ENCODE measurements at regions of chr1 and their contacts with region 1.

Region 1: GRCh38 chr1:167270349-167271092 is 49.8 kb downstream of the POU2F1 start:
- DNase-seq: no peak
- H3K4me3 Mint-ChIP-seq: no peak overlapping the region
- H3K27ac Mint-ChIP-seq: no peak overlapping the region
- H3K4me1 Mint-ChIP-seq: peaks cover 37% of the 10 kb centered on the region
- H3K27me3 Mint-ChIP-seq: no peaks in the 10 kb centered on the region

Region 2: GRCh38 chr1:167121375-167122120 is 149.0 kb before region 1 on chr1:
- CTCF ChIA-PET with region 1: no interaction called
- intact Hi-C with region 1: loop called (anchors 5 kb)
- DNase-seq: peak; percentile 58
- H3K4me3 Mint-ChIP-seq: peak overlapping the region; percentile 81
- H3K27ac Mint-ChIP-seq: no peak overlapping the region
- H3K4me1 Mint-ChIP-seq: peaks cover 3% of the 10 kb centered on the region
- H3K27me3 Mint-ChIP-seq: peaks cover 2% of the 10 kb centered on the region

Region 3: DNA sequence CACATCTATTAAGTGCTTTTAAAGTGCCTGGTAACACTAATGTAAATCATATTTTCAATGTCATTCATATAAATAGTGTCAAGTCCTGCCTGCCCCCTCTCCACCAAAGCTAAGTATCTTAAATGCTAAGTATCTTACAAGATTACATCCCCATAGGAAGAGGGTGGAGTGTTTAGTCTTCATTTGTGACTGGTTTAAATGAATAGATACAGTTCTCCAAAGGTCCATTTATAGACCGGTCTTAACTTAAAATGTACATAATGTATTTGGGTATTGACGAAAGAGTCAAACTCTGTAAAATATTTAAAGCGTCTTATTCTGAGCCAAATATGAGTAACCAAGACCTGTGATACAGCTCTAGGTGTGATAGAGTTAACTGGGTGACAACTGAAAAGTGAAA is 10.4 kb after region 1 on chr1:
- CTCF ChIA-PET with region 1: interaction called, 10 read pairs
- intact Hi-C with region 1: no loop called
- DNase-seq: no peak
- H3K4me3 Mint-ChIP-seq: no peak overlapping the region
- H3K27ac Mint-ChIP-seq: no peak overlapping the region
- H3K4me1 Mint-ChIP-seq: peaks cover 39% of the 10 kb centered on the region
- H3K27me3 Mint-ChIP-seq: no peaks in the 10 kb centered on the region

Region 4: GRCh38 chr1:167373398-167373797 is 102.9 kb after region 1 on chr1:
- CTCF ChIA-PET with region 1: no interaction called
- intact Hi-C with region 1: no loop called
- DNase-seq: no peak
- H3K4me3 Mint-ChIP-seq: no peak overlapping the region
- H3K27ac Mint-ChIP-seq: no peak overlapping the region
- H3K4me1 Mint-ChIP-seq: no peaks in the 10 kb centered on the region
- H3K27me3 Mint-ChIP-seq: no peaks in the 10 kb centered on the region

Region 5: GRCh38 chr1:167401260-167401873 is 130.8 kb after region 1 on chr1:
- CTCF ChIA-PET with region 1: interaction called, 11 read pairs
- intact Hi-C with region 1: loop called (anchors 2 kb)
- DNase-seq: peak; percentile 70
- H3K4me3 Mint-ChIP-seq: no peak overlapping the region
- H3K27ac Mint-ChIP-seq: no peak overlapping the region
- H3K4me1 Mint-ChIP-seq: no peaks in the 10 kb centered on the region
- H3K27me3 Mint-ChIP-seq: no peaks in the 10 kb centered on the region

Region 6: DNA sequence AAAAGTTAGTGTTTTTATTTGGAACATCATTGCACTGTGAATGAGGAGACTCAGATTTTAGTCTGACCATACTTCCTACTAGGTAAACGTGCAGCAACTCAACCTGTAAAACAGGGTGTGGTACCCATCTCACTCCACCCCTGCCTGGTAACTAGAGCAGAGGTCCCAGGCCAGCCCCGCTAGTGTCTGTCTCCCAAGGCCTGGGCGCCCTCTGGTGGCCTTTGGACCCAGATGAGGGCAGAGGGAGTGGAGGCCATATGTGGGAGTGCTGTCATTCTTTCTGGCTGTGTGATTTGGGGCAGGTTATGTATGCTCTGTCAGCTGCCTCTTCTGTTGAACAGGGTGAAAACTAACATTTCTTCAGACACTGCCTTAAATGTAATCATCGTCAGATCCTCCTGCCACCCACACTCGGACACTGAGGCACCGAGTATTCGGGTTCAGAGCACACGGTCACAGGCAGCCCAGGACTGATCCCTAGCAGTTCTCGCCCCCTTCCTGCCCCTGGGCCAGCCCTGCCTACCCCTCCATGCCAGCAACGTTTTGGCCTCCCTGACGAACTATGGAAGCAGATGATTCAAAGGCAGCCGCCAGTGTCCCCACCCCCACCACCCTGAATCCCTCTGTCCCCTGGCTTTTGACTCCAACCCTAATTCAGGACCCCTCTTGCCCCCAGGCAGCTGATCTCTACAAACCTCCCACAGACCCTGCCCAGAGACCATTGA is 171.8 kb after region 1 on chr1:
- CTCF ChIA-PET with region 1: interaction called, 26 read pairs
- intact Hi-C with region 1: loop called (anchors 1 kb)
- DNase-seq: peak; percentile 93
- H3K4me3 Mint-ChIP-seq: no peak overlapping the region
- H3K27ac Mint-ChIP-seq: peak overlapping the region; percentile 79
- H3K4me1 Mint-ChIP-seq: peaks cover 74% of the 10 kb centered on the region
- H3K27me3 Mint-ChIP-seq: no peaks in the 10 kb centered on the region

Measured in activated naive CD4-positive, alpha-beta T cell treated with anti-CD3 and anti-CD28 coated beads for 36 hours (primary cell).